ENCODE measurements at regions of chr9 and their contacts with region 1.

Region 1: GRCh38 chr9:70406434-70406862 is 8.0 kb downstream of the KLF9 start:
- DNase-seq: no peak
- H3K4me3 ChIP-seq: no peak overlapping the region
- H3K27ac ChIP-seq: peak overlapping the region; percentile 66
- H3K4me1 ChIP-seq: peaks cover 32% of the 10 kb centered on the region
- H3K27me3 ChIP-seq: no peaks in the 10 kb centered on the region
- CTCF ChIP-seq: no peak
- POLR2A ChIP-seq: no peak

Region 2: DNA sequence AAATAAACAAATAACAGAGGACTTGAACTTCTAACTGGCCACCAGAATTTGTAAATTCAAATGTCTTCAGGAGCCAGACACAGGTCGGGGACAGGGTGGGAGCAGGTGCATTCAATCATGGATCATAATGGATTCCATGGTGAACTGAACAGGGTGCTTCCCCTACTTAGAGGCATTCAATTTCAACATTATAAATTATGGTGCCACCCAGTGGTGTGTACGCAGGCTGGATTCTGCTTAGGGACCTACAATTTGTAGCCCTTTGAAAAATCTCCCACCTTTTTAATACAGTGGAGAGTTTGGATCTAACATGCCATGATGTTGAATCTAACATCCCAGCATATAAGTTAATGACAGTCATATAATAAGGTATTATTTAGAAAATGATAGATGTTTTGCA is 14.3 kb before region 1 on chr9:
- CTCF ChIA-PET with region 1: interaction called, 13 read pairs
- POLR2A ChIA-PET with region 1: interaction called, 4 read pairs
- dilution Hi-C with region 1: no loop called
- intact Hi-C with region 1: loop called (anchors 2 kb)
- DNase-seq: peak; percentile 12
- H3K4me3 ChIP-seq: no peak overlapping the region
- H3K27ac ChIP-seq: no peak overlapping the region
- H3K4me1 ChIP-seq: peaks cover 32% of the 10 kb centered on the region
- H3K27me3 ChIP-seq: no peaks in the 10 kb centered on the region
- CTCF ChIP-seq: peak in 1 of 2 donors; percentile 15
- POLR2A ChIP-seq: no peak